ENCODE measurements at regions of chr10 and their contacts with region 1.

Region 1: GRCh38 chr10:17910125-17910789 is 41.5 kb upstream of the SLC39A12 start:
- DNase-seq: peak; percentile 28 to 85 (median 56)
- H3K4me3 ChIP-seq: no peak overlapping the region
- H3K27ac ChIP-seq: no peak overlapping the region
- H3K4me1 ChIP-seq: no peaks in the 10 kb centered on the region
- H3K27me3 ChIP-seq: no peaks in the 10 kb centered on the region
- CTCF ChIP-seq: peak; percentile 31 to 62 (median 50)
- POLR2A ChIP-seq: no peak

Region 2: GRCh38 chr10:18104223-18104872 is 194.1 kb after region 1 on chr10:
- intact Hi-C with region 1: loop called in 1 of 2 experiments (anchors 10 kb)
- DNase-seq: peak; percentile 42 to 82 (median 65)
- H3K4me3 ChIP-seq: no peak overlapping the region
- H3K27ac ChIP-seq: no peak overlapping the region
- H3K4me1 ChIP-seq: no peaks in the 10 kb centered on the region
- H3K27me3 ChIP-seq: no peaks in the 10 kb centered on the region
- CTCF ChIP-seq: peak; percentile 62 to 76 (median 66)
- POLR2A ChIP-seq: no peak

Region 3: GRCh38 chr10:18214691-18215563 is 304.7 kb after region 1 on chr10:
- intact Hi-C with region 1: loop called in 1 of 2 experiments (anchors 5 kb)
- DNase-seq: peak in 6 of 7 donors; percentile 38 to 83 (median 62)
- H3K4me3 ChIP-seq: no peak overlapping the region
- H3K27ac ChIP-seq: no peak overlapping the region
- H3K4me1 ChIP-seq: peaks cover 0 to 7% of the 10 kb centered on the region in 2 donors
- H3K27me3 ChIP-seq: no peaks in the 10 kb centered on the region
- CTCF ChIP-seq: peak; percentile 69 to 86 (median 83)
- POLR2A ChIP-seq: no peak

Region 4: DNA sequence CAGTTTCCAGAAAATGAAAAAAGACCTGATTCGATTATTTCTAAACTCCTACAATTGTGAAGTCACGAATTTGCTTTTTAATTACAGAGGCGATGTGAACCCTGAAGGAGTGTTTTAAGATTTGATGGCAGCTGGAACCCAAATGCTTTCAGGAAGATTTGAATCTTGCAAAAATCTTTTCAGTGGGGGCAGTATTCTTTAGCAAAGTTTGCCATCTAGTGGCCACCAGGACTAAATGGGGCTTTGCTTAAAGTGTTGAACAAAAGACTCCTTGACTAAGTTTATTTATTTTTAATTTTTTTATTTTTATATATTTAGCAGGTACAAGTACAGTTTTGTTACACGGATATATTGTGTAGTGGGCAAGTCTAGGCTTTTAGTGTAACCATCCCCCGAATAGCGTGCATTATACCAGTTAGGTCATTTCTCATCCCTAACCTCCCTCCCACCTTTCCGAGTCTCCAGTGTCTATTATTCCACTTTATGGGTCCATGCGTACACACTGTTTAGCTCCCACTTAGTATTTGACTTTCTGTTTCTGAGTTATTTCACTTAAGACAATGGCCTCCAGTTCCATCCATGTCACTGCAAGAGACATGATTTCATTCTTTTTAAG is 328.7 kb after region 1 on chr10:
- intact Hi-C with region 1: loop called in 1 of 2 experiments (anchors 10 kb)
- DNase-seq: peak in 1 of 7 donors; percentile 30
- H3K4me3 ChIP-seq: no peak overlapping the region
- H3K27ac ChIP-seq: no peak overlapping the region
- H3K4me1 ChIP-seq: peaks cover 5 to 18% of the 10 kb centered on the region in 2 donors
- H3K27me3 ChIP-seq: no peaks in the 10 kb centered on the region
- CTCF ChIP-seq: peak; percentile 54 to 72 (median 58)
- POLR2A ChIP-seq: no peak

Measured in adrenal gland (tissue), 19 donors.